Endothelial cell of umbilical vein (primary cell): ENCODE measurements at regions of chr4 and their contacts with region 1.

Region 1: GRCh38 chr4:915595-915994 is 16.5 kb downstream of the GAK start:
- DNase-seq: peak; percentile 20
- H3K4me3 ChIP-seq: no peak overlapping the region
- H3K27ac ChIP-seq: no peak overlapping the region
- H3K4me1 ChIP-seq: peaks cover 8% of the 10 kb centered on the region
- H3K27me3 ChIP-seq: no peaks in the 10 kb centered on the region
- CTCF ChIP-seq: no peak
- POLR2A ChIP-seq: no peak

Region 2: DNA sequence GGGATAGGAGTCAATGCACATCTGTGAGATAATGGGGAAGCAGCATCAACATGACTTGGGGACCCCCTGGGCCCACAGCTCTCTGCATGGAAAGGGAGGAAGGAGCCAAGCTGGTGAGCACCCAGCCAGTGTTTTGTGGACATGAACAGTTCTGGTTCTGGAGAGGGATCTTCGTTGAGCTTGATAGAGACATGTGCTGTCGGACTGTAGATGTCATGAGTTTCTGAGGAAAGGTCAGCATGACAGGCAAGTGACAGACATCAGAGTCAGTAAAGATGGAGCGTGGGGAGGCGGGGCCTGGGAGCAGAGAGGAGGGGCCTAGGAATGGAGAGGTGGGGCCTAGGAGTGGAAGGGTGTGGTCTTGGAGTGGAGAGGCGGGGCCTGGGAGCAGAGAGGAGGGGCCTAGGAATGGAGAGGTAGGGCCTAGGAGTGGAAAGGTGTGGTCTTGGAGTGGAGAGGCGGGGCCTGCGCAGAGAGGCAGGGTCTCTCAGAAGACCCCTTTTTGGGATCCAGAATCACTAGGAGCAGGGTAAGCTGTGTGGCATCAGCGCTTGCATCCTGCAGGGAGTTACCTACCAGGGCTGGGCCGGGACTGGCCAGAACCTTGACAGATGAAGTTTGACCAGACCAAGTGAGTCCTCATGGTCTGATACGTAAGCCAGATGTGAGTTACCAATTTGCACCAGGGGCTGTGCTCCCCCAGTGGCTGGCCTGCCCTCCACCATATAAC is 382.8 kb before region 1 on chr4:
- CTCF ChIA-PET with region 1: no interaction called
- POLR2A ChIA-PET with region 1: no interaction called
- dilution Hi-C with region 1: no loop called
- intact Hi-C with region 1: no loop called
- DNase-seq: no peak
- H3K4me3 ChIP-seq: no peak overlapping the region
- H3K27ac ChIP-seq: no peak overlapping the region
- H3K4me1 ChIP-seq: no peaks in the 10 kb centered on the region
- H3K27me3 ChIP-seq: no peaks in the 10 kb centered on the region
- CTCF ChIP-seq: no peak
- POLR2A ChIP-seq: no peak

Region 3: DNA sequence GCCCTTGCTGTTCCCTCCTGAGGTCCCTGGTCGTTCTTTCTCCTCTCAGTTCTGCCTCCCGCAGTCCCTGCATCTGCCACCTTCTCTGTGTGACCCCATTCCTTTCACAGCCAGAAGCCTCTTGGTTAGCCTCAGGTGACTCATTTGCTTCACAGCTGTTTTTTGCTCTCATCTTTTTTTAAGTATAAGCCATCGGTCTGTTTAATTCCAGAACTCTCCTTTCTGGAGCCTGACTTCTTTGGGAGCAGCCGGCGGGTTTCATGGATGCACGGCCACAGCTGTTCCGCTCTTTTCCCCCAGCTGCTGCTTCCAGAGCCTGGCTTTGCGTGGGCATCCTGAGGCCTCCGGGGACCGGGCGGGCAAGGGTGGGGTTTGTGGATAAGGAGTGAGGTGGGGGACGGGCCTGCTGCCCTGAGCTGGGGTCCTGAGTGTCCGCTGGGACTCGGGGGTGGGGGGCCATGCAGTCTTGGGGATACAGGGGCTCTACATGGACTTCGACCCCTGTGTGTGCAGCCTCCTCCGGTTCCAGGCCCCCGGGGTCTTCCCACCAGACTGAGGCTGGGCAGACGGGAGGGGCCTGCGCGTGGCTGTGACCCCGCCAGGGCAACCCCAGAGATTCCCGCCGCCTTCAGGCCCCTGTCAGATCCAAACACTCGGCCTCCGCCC is 163.3 kb before region 1 on chr4:
- CTCF ChIA-PET with region 1: no interaction called
- POLR2A ChIA-PET with region 1: no interaction called
- dilution Hi-C with region 1: no loop called
- intact Hi-C with region 1: no loop called
- DNase-seq: no peak
- H3K4me3 ChIP-seq: no peak overlapping the region
- H3K27ac ChIP-seq: no peak overlapping the region
- H3K4me1 ChIP-seq: peaks cover 11% of the 10 kb centered on the region
- H3K27me3 ChIP-seq: no peaks in the 10 kb centered on the region
- CTCF ChIP-seq: no peak
- POLR2A ChIP-seq: no peak

Region 4: DNA sequence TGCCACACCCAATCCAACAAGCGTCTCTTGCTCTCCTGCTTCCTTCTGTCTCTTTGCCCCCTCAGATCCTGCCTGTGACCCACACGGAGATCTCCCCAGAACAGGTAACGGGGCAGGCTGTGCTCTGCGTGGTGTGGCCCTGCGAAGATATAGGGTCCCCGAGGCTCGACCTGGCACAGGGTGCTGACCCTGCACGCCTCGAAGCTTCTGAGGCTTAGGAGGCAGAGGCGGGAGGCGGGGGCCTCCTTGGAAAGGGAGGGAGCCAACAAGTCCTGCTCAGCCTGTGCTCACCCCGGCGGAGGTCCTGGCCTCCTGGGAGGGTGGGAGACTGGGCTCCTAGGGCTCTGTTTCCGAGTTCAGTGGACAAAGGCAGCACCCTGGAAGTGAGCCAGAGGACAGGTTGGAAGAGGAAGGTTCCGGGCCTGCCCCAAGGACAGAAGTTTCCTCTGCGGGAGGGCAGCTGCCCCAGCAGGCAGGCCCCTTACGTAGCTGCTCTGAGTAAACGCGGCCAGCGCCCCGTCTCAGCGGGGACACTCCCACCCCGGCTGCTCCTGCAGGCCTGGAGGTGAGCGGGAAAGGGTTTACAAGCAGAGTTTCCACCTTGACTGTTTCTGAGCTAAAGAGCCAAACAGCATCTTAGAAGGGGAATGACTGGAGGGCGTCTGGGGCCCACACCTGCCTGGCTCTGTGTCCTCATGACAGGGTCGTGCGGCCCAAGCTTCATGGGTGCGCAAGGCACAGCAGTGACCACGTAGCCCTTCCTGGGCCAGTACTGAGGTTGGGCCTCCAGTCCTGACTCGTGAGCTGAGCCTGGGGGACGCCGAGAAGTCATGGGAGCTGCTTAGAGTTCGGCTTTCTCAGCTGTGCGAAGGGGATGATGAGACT is 32.7 kb after region 1 on chr4:
- CTCF ChIA-PET with region 1: no interaction called
- POLR2A ChIA-PET with region 1: no interaction called
- dilution Hi-C with region 1: no loop called
- intact Hi-C with region 1: loop called (anchors 2 kb)
- DNase-seq: no peak
- H3K4me3 ChIP-seq: no peak overlapping the region
- H3K27ac ChIP-seq: no peak overlapping the region
- H3K4me1 ChIP-seq: no peaks in the 10 kb centered on the region
- H3K27me3 ChIP-seq: no peaks in the 10 kb centered on the region
- CTCF ChIP-seq: no peak
- POLR2A ChIP-seq: no peak

Region 5: DNA sequence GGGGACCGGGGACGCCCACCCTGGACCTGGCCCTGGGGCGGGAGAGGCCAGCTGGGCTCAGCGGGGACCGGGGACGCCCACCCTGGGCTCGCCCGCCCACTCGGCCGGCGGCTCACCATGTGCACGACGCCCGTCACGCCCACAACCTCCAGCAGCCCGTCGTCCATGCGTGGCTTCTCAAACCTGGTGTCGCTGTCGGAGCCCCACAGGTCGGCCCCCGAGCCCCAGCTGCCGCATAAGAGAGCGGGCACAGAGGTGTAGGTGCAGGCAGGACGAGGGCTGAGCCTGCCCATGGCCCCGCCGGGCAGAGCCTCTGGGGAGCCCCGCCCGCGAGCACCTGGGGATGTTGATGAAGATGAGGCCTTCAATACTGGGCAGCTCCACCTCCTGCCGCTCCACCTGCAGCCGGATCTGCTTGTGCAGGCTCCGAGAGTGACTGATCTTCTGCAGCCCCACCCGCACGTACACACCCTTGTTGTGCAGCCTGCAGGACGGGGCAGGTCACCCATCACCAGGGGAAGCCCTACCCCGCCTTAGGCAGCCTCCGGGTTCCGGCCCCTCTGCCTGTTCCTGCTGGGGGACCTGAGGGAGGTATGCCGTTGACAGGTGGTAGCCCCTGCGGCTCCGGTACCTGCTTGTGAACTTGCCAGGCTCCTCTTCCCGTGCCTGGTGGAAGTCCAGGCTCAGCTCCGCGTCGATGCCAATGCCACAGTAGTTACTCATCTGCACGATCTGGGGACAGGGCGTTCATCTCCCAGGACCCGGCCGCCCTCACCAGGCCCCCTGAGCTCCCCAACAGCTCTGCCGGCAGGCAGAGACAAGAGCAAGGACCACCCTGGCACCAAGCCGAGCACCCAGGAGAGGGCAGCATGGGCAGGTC is 46.0 kb after region 1 on chr4:
- CTCF ChIA-PET with region 1: no interaction called
- POLR2A ChIA-PET with region 1: no interaction called
- dilution Hi-C with region 1: no loop called
- intact Hi-C with region 1: no loop called
- DNase-seq: no peak
- H3K4me3 ChIP-seq: no peak overlapping the region
- H3K27ac ChIP-seq: no peak overlapping the region
- H3K4me1 ChIP-seq: no peaks in the 10 kb centered on the region
- H3K27me3 ChIP-seq: no peaks in the 10 kb centered on the region
- CTCF ChIP-seq: no peak
- POLR2A ChIP-seq: no peak